ENCODE measurements at regions of chr12 and their contacts with region 1.

Region 1: DNA sequence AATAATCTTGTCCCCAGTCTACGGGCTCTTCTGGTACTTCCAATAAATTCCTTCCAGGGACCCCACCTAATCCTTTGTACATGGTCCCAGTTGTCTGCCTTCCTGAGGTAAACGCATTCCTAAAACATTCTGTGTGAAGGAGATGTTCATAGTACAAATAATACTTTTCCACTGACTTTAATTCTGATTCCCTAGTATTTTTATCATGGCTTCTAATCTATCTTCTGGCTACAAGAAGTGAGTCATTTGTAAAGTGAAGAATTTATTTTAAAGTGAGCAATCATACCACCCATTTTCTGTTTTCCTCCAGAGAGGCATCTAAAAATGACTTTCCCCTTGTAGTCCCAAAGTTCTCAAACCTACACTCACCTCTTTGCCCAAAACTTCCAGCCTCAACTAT is 65.9 kb upstream of the NUDT4 start:
- DNase-seq: no peak
- ATAC-seq: no peak
- H3K4me3 ChIP-seq: no peak overlapping the region
- H3K27ac ChIP-seq: no peak overlapping the region
- H3K4me1 ChIP-seq: peaks cover 70% of the 10 kb centered on the region
- H3K27me3 ChIP-seq: no peaks in the 10 kb centered on the region
- CTCF ChIP-seq: no peak
- EP300 ChIP-seq: no peak
- POLR2A ChIP-seq: no peak
- RAD21 ChIP-seq: no peak

Region 2: GRCh38 chr12:93008044-93008778 is 303.6 kb before region 1 on chr12:
- CTCF ChIA-PET with region 1: no interaction called
- POLR2A ChIA-PET with region 1: interaction called, 4 read pairs
- in situ Hi-C with region 1: loop called (anchors 10 kb)
- intact Hi-C with region 1: loop called (anchors 5 kb)
- DNase-seq: peak; percentile 62
- ATAC-seq: no peak
- H3K4me3 ChIP-seq: peak overlapping the region; percentile 25 to 68 (median 50); a peak in 5 of 6 replicates
- H3K27ac ChIP-seq: peak overlapping the region; percentile 89
- H3K4me1 ChIP-seq: peaks cover 79% of the 10 kb centered on the region
- H3K27me3 ChIP-seq: no peaks in the 10 kb centered on the region
- CTCF ChIP-seq: no peak
- EP300 ChIP-seq: no peak; a peak in 1 of 4 replicates
- POLR2A ChIP-seq: no peak
- RAD21 ChIP-seq: no peak

Region 3: GRCh38 chr12:93273834-93274564 is 37.8 kb before region 1 on chr12:
- CTCF ChIA-PET with region 1: no interaction called
- POLR2A ChIA-PET with region 1: no interaction called
- in situ Hi-C with region 1: no loop called
- intact Hi-C with region 1: loop called (anchors 5 kb)
- DNase-seq: peak; percentile 90
- ATAC-seq: peak; percentile 89
- H3K4me3 ChIP-seq: peak overlapping the region; percentile 2 to 38 (median 34); a peak in 4 of 6 replicates
- H3K27ac ChIP-seq: peak overlapping the region; percentile 73
- H3K4me1 ChIP-seq: peaks cover 36% of the 10 kb centered on the region
- H3K27me3 ChIP-seq: no peaks in the 10 kb centered on the region
- CTCF ChIP-seq: no peak
- EP300 ChIP-seq: peak in 1 of 2 experiments; percentile 66; a peak in 2 of 4 replicates
- POLR2A ChIP-seq: no peak
- RAD21 ChIP-seq: no peak